Stomach (tissue), 19 donors: ENCODE measurements at regions of chr15 and their contacts with region 1.

Region 1: GRCh38 chr15:66603301-66604179 is 37.7 kb upstream of the LCTL start:
- DNase-seq: peak; percentile 71 to 90
- H3K4me3 ChIP-seq: no peak overlapping the region
- H3K27ac ChIP-seq: no peak overlapping the region
- H3K4me1 ChIP-seq: peaks cover 0 to 7% (median 0%) of the 10 kb centered on the region in 4 donors
- H3K27me3 ChIP-seq: no peaks in the 10 kb centered on the region
- CTCF ChIP-seq: peak in 5 of 7 experiments; percentile 57 to 86 (median 73)
- EP300 ChIP-seq: no peak
- POLR2A ChIP-seq: no peak

Region 2: DNA sequence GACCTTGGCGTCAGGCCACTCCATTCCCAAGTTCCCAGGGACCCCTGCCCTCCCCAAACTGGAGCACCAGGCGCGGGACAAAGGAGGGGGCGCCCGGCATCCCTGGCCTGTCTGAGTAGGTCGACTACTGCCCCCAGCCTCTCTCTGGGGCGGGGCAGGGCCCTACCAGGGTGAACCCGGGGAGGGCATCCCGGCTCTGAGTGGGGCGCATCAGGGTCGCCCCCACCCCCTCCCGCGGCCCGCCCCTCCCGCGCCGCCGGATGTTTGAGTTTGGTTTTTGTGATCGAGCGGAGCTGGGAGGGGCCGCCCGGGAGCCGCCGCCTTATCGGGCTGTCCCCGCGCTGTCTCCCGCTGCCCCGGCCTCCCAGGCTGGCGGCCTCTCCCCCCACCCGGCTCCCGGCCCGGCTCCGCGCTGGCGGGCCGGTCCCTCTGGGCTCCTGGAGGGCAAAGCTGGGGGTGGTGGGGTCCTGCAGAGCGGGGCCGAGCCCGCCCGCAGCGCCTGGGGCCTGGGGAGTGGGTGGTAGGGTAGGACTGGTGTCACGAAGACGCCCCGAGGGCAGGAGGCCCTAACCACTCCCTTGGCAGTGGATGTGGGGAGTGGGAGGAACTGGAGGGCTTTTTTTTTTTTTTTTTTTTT is 51.3 kb after region 1 on chr15:
- intact Hi-C with region 1: no loop called
- DNase-seq: peak; percentile 29 to 77
- H3K4me3 ChIP-seq: peak overlapping the region; percentile 25 to 42 (median 31)
- H3K27ac ChIP-seq: peak overlapping the region in 3 of 5 donors; percentile 36 to 62 (median 50)
- H3K4me1 ChIP-seq: peaks cover 9 to 47% (median 40%) of the 10 kb centered on the region in 4 donors
- H3K27me3 ChIP-seq: peaks cover 0 to 14% (median 5%) of the 10 kb centered on the region in 3 donors
- CTCF ChIP-seq: no peak
- EP300 ChIP-seq: no peak
- POLR2A ChIP-seq: no peak

Region 3: DNA sequence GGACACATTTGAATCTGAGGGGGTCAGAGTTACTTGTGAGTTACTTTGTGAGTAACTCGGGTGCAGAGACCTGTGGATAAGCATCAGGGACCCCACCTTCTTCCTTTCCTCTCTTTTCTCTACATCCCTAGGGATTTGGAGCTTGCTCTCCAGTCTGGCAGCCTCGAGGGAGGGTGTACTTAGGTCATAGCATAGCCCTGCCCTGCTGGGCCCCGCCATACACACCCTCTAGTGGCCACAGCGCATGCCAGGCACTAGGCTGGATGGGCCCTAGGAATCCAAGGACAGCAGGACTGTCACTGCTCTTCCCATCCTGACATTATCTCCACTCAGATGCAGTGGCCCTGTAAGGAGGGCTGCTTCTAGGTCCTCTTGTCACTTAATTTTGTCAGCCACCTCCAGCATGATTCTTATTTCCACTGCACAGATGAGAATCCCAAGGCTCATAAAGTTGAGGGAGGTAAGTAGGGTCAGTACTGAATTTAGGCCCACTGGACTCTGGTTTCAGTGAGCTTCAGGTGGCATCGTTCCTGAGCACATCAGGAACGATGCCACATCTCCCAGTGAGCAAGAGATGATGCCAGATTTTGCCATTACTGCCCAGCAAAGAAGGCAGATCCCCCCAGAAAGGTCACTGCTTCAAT is 94.9 kb after region 1 on chr15:
- intact Hi-C with region 1: loop called (anchors 10 kb)
- DNase-seq: peak; percentile 77 to 84
- H3K4me3 ChIP-seq: no peak overlapping the region
- H3K27ac ChIP-seq: no peak overlapping the region
- H3K4me1 ChIP-seq: peaks cover 0 to 30% (median 23%) of the 10 kb centered on the region in 4 donors
- H3K27me3 ChIP-seq: peaks cover 0 to 9% (median 0%) of the 10 kb centered on the region in 3 donors
- CTCF ChIP-seq: peak in 5 of 7 experiments; percentile 29 to 79 (median 70)
- EP300 ChIP-seq: no peak
- POLR2A ChIP-seq: no peak

Region 4: GRCh38 chr15:66774001-66774814 is 170.7 kb after region 1 on chr15:
- intact Hi-C with region 1: loop called (anchors 10 kb)
- DNase-seq: peak; percentile 92 to 95
- H3K4me3 ChIP-seq: no peak overlapping the region
- H3K27ac ChIP-seq: peak overlapping the region; percentile 57 to 88 (median 84)
- H3K4me1 ChIP-seq: peaks cover 61 to 85% (median 76%) of the 10 kb centered on the region in 4 donors
- H3K27me3 ChIP-seq: no peaks in the 10 kb centered on the region
- CTCF ChIP-seq: peak in 6 of 7 experiments; percentile 89 to 99 (median 96)
- EP300 ChIP-seq: no peak
- POLR2A ChIP-seq: no peak

Region 5: DNA sequence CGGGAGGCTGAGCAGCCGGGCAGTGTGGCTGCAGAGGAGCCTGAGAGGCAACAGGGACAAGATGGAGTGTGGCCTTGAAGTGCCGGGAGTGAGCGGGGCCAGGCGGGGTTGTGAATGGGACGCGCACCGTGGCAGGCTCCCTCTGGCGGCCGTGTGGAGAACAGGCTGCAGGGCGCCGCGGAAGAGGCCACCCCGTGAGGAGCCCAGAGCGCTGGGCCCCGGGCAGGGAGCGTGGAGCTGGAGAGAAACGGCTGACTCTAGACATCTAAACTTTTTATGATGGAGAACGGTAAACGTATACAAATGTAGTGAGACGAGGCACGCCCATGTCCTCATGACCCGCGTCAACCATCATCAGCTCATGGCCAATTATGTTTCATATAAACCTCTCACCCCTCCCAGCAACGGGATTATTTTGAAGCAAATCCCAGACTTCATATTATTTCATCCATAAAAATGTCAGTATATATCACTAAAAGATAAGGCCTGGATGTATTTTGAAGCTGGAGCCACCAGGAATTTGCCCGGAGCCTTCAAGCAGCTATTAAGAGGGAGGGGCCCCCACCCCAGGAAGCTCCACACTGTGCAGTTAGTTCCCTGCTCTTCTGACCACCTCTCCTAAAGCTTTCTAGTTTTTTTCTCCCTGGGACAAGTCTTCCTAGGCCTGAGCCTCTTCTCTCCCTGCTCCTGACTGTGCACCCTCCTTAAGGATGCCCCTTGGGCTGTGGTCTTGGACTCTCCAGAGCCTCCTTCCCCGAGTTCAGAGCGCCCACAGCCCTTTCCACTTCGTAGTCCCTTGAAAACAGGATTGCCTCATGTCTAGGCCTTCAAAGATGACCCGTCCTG is 247.9 kb after region 1 on chr15:
- intact Hi-C with region 1: loop called (anchors 5 kb)
- DNase-seq: peak; percentile 89 to 96
- H3K4me3 ChIP-seq: no peak overlapping the region
- H3K27ac ChIP-seq: peak overlapping the region in 4 of 5 donors; percentile 21 to 72 (median 41)
- H3K4me1 ChIP-seq: peaks cover 13 to 39% (median 19%) of the 10 kb centered on the region in 4 donors
- H3K27me3 ChIP-seq: no peaks in the 10 kb centered on the region
- CTCF ChIP-seq: peak in 5 of 7 experiments; percentile 94 to 98 (median 97)
- EP300 ChIP-seq: no peak
- POLR2A ChIP-seq: no peak

Region 6: GRCh38 chr15:66940368-66940767 is 336.8 kb after region 1 on chr15:
- intact Hi-C with region 1: no loop called
- DNase-seq: no peak
- H3K4me3 ChIP-seq: no peak overlapping the region
- H3K27ac ChIP-seq: no peak overlapping the region
- H3K4me1 ChIP-seq: peaks cover 0 to 32% (median 12%) of the 10 kb centered on the region in 4 donors
- H3K27me3 ChIP-seq: no peaks in the 10 kb centered on the region
- CTCF ChIP-seq: no peak
- EP300 ChIP-seq: no peak
- POLR2A ChIP-seq: no peak